Naive thymus-derived CD4-positive, alpha-beta T cell (primary cell): ENCODE measurements at regions of chr18 and their contacts with region 1.

Region 1: GRCh38 chr18:44679056-44679905 is 1.4 kb upstream of the SETBP1 start:
- DNase-seq: peak in 6 of 9 donors; percentile 3 to 75 (median 24)
- ATAC-seq: peak; percentile 94
- H3K4me3 ChIP-seq: peak overlapping the region; percentile 50
- H3K4me3 Mint-ChIP-seq: peak overlapping the region in 8 of 10 donors; percentile 57 to 81 (median 72)
- H3K27ac ChIP-seq: no peak overlapping the region
- H3K27ac Mint-ChIP-seq: no peak overlapping the region
- H3K4me1 ChIP-seq: peaks cover 0 to 8% of the 10 kb centered on the region in 2 donors
- H3K4me1 Mint-ChIP-seq: peaks cover 0 to 12% (median 7%) of the 10 kb centered on the region in 7 donors
- H3K27me3 ChIP-seq: peaks cover 0 to 9% of the 10 kb centered on the region in 2 donors
- H3K27me3 Mint-ChIP-seq: peaks cover 17 to 35% (median 28%) of the 10 kb centered on the region in 5 donors

Region 2: DNA sequence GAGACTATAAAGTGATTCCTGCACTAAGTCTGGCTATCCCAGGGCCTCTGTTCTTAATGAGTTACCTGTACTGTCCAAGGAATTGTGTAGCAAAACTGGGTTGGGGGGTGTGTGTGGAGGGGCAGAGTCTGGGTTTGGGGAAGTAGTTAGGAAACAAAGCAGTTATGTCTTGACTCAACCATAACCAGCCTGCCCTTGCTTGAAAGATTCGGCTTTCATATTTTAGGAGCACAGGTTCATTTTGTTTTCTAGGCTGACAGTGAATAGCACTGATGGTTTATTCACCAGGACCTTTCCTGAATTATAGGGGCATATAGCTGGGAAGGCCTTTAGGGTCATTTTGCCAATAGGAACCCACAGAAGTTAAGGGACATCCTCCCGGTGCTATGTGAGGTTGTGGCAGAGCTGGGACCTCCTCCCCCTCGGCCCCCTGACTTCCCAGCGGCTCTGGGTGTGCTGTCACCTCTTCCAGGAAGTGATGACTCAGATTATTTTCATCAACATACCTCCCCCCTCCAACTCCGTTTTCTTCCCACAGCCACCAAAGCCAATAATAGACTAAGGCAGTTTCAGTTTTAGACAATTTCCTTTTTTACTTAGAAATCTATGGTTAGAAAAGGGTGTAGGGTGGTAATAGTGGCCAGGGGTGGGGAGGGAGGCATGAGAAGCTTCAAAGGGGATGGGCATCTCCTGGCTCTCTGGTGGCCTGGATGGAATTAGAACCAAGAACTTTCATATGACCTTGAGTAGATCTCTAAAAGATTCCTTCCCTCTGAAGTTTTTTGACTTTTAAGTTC is 46.2 kb after region 1 on chr18:
- CTCF ChIA-PET with region 1: no interaction called
- POLR2A ChIA-PET with region 1: no interaction called
- intact Hi-C with region 1: loop called in 1 of 2 experiments (anchors 1 kb)
- DNase-seq: peak in 2 of 9 donors; percentile 11 to 69
- ATAC-seq: peak; percentile 79
- H3K4me3 ChIP-seq: peak overlapping the region; percentile 15
- H3K4me3 Mint-ChIP-seq: peak overlapping the region; percentile 19 to 68 (median 43)
- H3K27ac ChIP-seq: no peak overlapping the region
- H3K27ac Mint-ChIP-seq: peak overlapping the region; percentile 3 to 86 (median 72)
- H3K4me1 ChIP-seq: peaks cover 0 to 67% of the 10 kb centered on the region in 2 donors
- H3K4me1 Mint-ChIP-seq: peaks cover 30 to 89% (median 49%) of the 10 kb centered on the region in 7 donors
- H3K27me3 ChIP-seq: no peaks in the 10 kb centered on the region
- H3K27me3 Mint-ChIP-seq: peaks cover 0 to 16% (median 0%) of the 10 kb centered on the region in 5 donors

Region 3: GRCh38 chr18:44799907-44800421 is 120.7 kb after region 1 on chr18:
- CTCF ChIA-PET with region 1: no interaction called
- POLR2A ChIA-PET with region 1: no interaction called
- intact Hi-C with region 1: loop called in 1 of 2 experiments (anchors 5 kb)
- DNase-seq: no peak
- ATAC-seq: no peak
- H3K4me3 ChIP-seq: no peak overlapping the region
- H3K4me3 Mint-ChIP-seq: peak overlapping the region in 1 of 10 donors; percentile 34
- H3K27ac ChIP-seq: no peak overlapping the region
- H3K27ac Mint-ChIP-seq: peak overlapping the region in 1 of 9 donors; percentile 61
- H3K4me1 ChIP-seq: peaks cover 0 to 9% of the 10 kb centered on the region in 2 donors
- H3K4me1 Mint-ChIP-seq: peaks cover 0 to 40% (median 0%) of the 10 kb centered on the region in 7 donors
- H3K27me3 ChIP-seq: no peaks in the 10 kb centered on the region
- H3K27me3 Mint-ChIP-seq: peaks cover 0 to 3% (median 0%) of the 10 kb centered on the region in 5 donors

Region 4: GRCh38 chr18:44826418-44827259 is 147.4 kb after region 1 on chr18:
- CTCF ChIA-PET with region 1: no interaction called
- POLR2A ChIA-PET with region 1: no interaction called
- intact Hi-C with region 1: no loop called
- DNase-seq: no peak
- ATAC-seq: no peak
- H3K4me3 ChIP-seq: no peak overlapping the region
- H3K4me3 Mint-ChIP-seq: no peak overlapping the region
- H3K27ac ChIP-seq: no peak overlapping the region
- H3K27ac Mint-ChIP-seq: no peak overlapping the region
- H3K4me1 ChIP-seq: no peaks in the 10 kb centered on the region
- H3K4me1 Mint-ChIP-seq: peaks cover 0 to 11% (median 0%) of the 10 kb centered on the region in 7 donors
- H3K27me3 ChIP-seq: no peaks in the 10 kb centered on the region
- H3K27me3 Mint-ChIP-seq: peaks cover 0 to 36% (median 4%) of the 10 kb centered on the region in 5 donors

Region 5: GRCh38 chr18:44895176-44895798 is 216.0 kb after region 1 on chr18:
- CTCF ChIA-PET with region 1: no interaction called
- POLR2A ChIA-PET with region 1: no interaction called
- intact Hi-C with region 1: loop called in 1 of 2 experiments (anchors 1 kb)
- DNase-seq: no peak
- ATAC-seq: no peak
- H3K4me3 ChIP-seq: no peak overlapping the region
- H3K4me3 Mint-ChIP-seq: no peak overlapping the region
- H3K27ac ChIP-seq: no peak overlapping the region
- H3K27ac Mint-ChIP-seq: no peak overlapping the region
- H3K4me1 ChIP-seq: no peaks in the 10 kb centered on the region
- H3K4me1 Mint-ChIP-seq: peaks cover 0 to 24% (median 6%) of the 10 kb centered on the region in 7 donors
- H3K27me3 ChIP-seq: no peaks in the 10 kb centered on the region
- H3K27me3 Mint-ChIP-seq: peaks cover 0 to 18% (median 0%) of the 10 kb centered on the region in 5 donors

Region 6: DNA sequence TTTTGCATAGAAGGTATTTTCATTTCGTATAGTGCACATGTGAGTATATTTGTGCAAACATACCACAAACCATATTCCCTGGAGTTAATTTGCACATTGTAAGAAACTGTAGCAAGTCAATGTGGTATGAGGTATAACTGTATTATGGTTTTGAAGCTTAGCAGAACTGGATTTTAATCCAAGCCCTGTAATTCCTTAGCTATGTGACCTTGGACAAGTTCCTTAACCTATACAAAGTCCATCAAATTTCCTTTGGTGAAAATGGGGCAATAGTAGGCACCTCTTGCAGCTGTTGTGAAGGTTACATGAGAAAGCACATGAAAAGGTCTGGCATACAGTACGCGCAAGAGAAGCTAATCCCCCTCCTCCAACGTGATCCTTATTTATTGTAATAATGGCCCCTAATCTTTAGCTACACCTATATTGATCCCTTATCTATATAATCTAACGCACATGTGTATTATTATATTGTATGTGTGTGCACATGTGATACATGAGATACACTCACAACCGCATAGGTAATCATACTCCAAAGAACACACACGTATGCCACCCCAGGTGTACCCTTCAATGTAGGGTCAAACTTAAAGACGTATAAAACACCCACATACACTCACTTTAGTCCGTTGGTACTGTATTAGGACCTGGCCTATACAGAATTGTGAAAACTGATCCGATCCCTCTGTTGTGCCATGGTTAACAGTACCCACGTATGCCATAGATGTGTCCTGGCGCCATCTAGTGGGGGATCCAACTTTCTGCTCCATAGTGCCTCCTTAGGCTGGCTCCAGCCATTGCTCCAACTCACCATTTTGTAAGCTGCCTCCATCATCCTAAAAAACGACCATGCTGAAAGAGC is 533.1 kb after region 1 on chr18:
- CTCF ChIA-PET with region 1: no interaction called
- POLR2A ChIA-PET with region 1: no interaction called
- intact Hi-C with region 1: loop called in 1 of 2 experiments (anchors 1 kb)
- DNase-seq: peak in 6 of 9 donors; percentile 3 to 69 (median 26)
- ATAC-seq: peak; percentile 98
- H3K4me3 ChIP-seq: no peak overlapping the region
- H3K4me3 Mint-ChIP-seq: no peak overlapping the region
- H3K27ac ChIP-seq: no peak overlapping the region
- H3K27ac Mint-ChIP-seq: no peak overlapping the region
- H3K4me1 ChIP-seq: no peaks in the 10 kb centered on the region
- H3K4me1 Mint-ChIP-seq: peaks cover 0 to 3% (median 0%) of the 10 kb centered on the region in 7 donors
- H3K27me3 ChIP-seq: no peaks in the 10 kb centered on the region
- H3K27me3 Mint-ChIP-seq: peaks cover 0 to 6% (median 5%) of the 10 kb centered on the region in 5 donors